Transverse colon (tissue), 4 donors: ENCODE measurements at regions of chr9 and their contacts with region 1.

Region 1: GRCh38 chr9:94917840-94918753 is 191.6 kb downstream of the AOPEP start:
- DNase-seq: no peak
- H3K4me3 ChIP-seq: no peak overlapping the region
- H3K27ac ChIP-seq: no peak overlapping the region
- H3K4me1 ChIP-seq: peaks cover 17 to 46% (median 22%) of the 10 kb centered on the region in 4 donors
- H3K27me3 ChIP-seq: no peaks in the 10 kb centered on the region
- CTCF ChIP-seq: no peak
- EP300 ChIP-seq: no peak
- POLR2A ChIP-seq: no peak

Region 2: DNA sequence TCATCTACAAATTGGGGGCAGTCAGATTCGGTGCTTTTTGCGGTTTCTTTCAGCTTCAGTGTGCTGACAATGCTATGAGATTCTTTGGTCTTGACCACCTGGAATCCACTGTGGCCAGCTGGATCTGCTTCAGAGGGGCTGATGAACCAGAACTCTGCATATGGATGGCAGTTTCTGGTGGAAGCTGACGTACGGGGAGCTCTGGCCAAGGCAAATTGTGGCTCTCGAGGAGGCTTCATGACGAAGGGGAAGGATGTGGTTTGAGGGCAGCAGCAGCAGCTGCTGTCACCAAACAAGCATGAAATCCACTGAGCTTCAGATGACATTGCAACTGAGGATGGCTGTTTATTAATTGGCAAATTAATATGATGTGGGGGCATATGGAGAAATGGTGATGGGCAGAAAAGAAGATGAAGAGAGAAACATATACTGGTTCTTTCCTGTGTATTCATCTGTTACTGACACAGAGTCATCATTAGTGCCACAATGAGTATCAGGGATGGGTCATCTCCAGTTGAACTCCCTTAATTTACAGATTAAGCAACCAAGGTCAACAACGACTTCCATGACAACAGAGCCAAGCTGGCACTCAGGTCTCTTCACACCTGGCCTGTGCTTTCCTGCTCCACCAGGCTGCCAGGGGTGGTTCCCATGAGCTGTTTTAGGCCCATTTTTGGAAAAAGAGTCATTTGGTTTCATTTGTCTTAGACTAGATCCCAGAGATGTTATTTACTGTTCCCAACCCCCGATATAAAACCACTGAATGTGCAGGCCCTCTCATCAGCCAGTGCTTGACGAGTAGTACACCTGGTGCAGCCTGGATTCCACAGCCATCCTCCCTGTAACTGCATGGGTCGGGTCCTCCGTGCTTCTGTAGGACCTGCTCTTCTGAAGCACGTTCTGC is 56.9 kb before region 1 on chr9:
- in situ Hi-C with region 1: no loop called
- intact Hi-C with region 1: loop called (anchors 10 kb)
- DNase-seq: peak; percentile 59
- H3K4me3 ChIP-seq: no peak overlapping the region
- H3K27ac ChIP-seq: peak overlapping the region; percentile 45 to 63 (median 56)
- H3K4me1 ChIP-seq: peaks cover 0 to 32% (median 15%) of the 10 kb centered on the region in 4 donors
- H3K27me3 ChIP-seq: no peaks in the 10 kb centered on the region
- CTCF ChIP-seq: no peak
- EP300 ChIP-seq: no peak
- POLR2A ChIP-seq: no peak

Region 3: GRCh38 chr9:94984891-94985476 is 66.9 kb after region 1 on chr9:
- in situ Hi-C with region 1: no loop called
- intact Hi-C with region 1: no loop called
- DNase-seq: no peak
- H3K4me3 ChIP-seq: no peak overlapping the region
- H3K27ac ChIP-seq: no peak overlapping the region
- H3K4me1 ChIP-seq: peaks cover 0 to 4% (median 0%) of the 10 kb centered on the region in 4 donors
- H3K27me3 ChIP-seq: no peaks in the 10 kb centered on the region
- CTCF ChIP-seq: no peak
- EP300 ChIP-seq: no peak
- POLR2A ChIP-seq: no peak